ENCODE measurements at regions of chrX and their contacts with region 1.

Region 1: DNA sequence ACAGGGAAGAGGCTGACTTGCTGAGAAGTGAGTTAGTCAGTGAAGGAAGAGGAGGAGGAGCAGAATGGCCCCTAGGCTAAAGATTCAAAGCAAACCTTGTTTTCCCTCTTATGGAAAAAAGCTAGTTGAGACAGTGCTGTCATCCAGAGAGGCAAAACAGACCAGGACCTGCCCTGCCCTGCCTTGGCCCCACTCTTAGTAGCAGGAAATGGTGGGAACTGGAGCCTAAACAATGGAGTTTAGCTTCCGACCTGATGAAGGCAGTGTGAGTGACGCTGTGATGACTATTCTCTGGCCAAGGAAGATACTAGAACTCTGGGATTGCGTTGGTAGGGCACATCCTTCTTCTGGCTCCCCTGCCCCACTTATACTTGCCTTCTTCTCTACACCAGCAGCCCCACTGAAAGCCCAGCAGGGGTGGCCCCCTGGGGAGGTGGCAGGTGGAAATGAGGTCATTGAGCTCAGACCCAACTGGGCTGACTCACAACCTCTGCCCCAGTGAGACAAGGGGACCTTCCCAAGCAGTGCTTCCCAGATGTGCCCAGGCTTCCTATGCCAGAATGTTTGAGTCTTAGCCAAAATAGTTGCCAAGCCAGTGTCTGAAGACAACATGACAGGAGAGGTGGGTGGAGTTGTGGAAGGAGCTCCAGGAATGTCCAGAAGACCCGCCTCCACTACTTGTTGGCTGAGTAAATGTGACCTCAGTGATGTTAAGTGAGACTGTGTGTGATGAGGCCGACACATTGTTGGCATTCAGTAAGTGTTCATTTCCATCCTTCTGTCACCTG is 38.8 kb downstream of the MSN start:
- DNase-seq: no peak
- H3K4me3 ChIP-seq: no peak overlapping the region
- H3K27ac ChIP-seq: peak overlapping the region in 42 of 59 donors; percentile 11 to 78 (median 53)
- H3K27me3 ChIP-seq: peaks cover 0 to 54% (median 8%) of the 10 kb centered on the region in 45 donors
- CTCF ChIP-seq: no peak

Region 2: GRCh38 chrX:65595460-65595876 is 110.8 kb before region 1 on chrX:
- intact Hi-C with region 1: loop called in 1 of 2 experiments (anchors 10 kb)
- DNase-seq: peak; percentile 59 to 94 (median 82)
- H3K4me3 ChIP-seq: no peak overlapping the region
- H3K27ac ChIP-seq: peak overlapping the region in 44 of 59 donors; percentile 1 to 80 (median 62)
- H3K27me3 ChIP-seq: peaks cover 0 to 90% (median 29%) of the 10 kb centered on the region in 45 donors
- CTCF ChIP-seq: peak; percentile 63 to 99 (median 94)

Region 3: GRCh38 chrX:65755786-65756185 is 49.6 kb after region 1 on chrX:
- intact Hi-C with region 1: no loop called
- DNase-seq: no peak
- H3K4me3 ChIP-seq: no peak overlapping the region
- H3K27ac ChIP-seq: no peak overlapping the region
- H3K27me3 ChIP-seq: peaks cover 0 to 41% (median 13%) of the 10 kb centered on the region in 45 donors
- CTCF ChIP-seq: no peak

Measured in dorsolateral prefrontal cortex (tissue), 120 donors.